Right lobe of liver (tissue), 6 donors: ENCODE measurements at regions of chr11 and their contacts with region 1.

Region 1: GRCh38 chr11:114060392-114061350 is 1.2 kb downstream of the ZBTB16 start:
- DNase-seq: peak in 2 of 3 donors; percentile 64 to 70
- ATAC-seq: peak in 2 of 4 donors; percentile 14 to 20
- H3K4me3 ChIP-seq: peak overlapping the region; percentile 78 to 96 (median 89)
- H3K27ac ChIP-seq: peak overlapping the region; percentile 93 to 100 (median 94)
- H3K4me1 ChIP-seq: peaks cover 0 to 56% (median 21%) of the 10 kb centered on the region in 4 donors
- H3K27me3 ChIP-seq: no peaks in the 10 kb centered on the region
- CTCF ChIP-seq: no peak
- POLR2A ChIP-seq: no peak

Region 2: GRCh38 chr11:113994077-113994954 is 66.4 kb before region 1 on chr11:
- intact Hi-C with region 1: no loop called
- DNase-seq: no peak
- ATAC-seq: peak; percentile 52 to 68 (median 60)
- H3K4me3 ChIP-seq: no peak overlapping the region
- H3K27ac ChIP-seq: no peak overlapping the region
- H3K4me1 ChIP-seq: peaks cover 0 to 4% (median 0%) of the 10 kb centered on the region in 4 donors
- H3K27me3 ChIP-seq: no peaks in the 10 kb centered on the region
- CTCF ChIP-seq: peak; percentile 64 to 69 (median 68)
- POLR2A ChIP-seq: no peak

Region 3: DNA sequence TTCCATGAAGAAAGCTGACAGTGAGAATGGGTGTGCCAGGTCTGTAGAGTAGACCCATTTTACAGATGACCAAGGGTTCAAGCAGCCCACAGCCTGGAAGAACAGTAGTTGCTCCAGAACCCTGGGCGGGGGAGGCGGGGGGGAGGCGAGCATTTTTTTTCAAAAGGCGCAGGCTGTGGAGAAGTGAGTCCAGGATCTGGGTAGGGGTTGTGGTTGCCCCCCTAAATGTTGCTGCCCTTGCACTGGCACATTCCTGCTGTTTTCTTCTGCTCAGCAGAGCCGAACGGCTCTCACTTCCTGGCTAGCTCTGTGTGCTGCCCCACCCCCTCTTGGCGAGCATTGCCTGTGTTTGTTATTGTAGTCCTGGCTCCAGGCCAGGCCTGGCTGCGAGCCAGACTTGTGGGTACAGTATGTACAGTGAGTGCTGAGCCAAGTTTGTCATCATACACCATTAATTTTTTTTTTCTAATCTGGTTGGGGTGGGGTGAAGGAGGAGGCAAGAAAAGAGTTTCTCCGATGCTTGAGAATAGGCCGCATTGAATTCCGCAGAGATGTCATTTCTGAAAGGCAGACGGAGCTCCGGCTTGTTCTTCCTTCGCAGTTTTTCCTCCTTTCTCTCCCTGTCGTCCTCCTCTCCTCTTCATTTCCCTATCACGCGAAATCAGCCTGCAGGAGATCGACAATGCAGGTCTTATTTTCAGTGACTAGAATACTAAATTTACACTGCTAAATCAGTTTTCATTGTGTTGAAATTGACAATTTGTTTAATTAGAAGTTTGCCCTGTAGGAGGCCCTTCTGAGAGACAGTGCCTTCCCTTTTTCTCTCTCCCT is 99.3 kb after region 1 on chr11:
- intact Hi-C with region 1: loop called in 1 of 2 experiments (anchors 10 kb)
- DNase-seq: peak; percentile 96 to 97 (median 96)
- ATAC-seq: peak; percentile 63 to 69 (median 64)
- H3K4me3 ChIP-seq: peak overlapping the region in 1 of 3 donors; percentile 9
- H3K27ac ChIP-seq: peak overlapping the region; percentile 81 to 98 (median 93)
- H3K4me1 ChIP-seq: peaks cover 0 to 97% (median 56%) of the 10 kb centered on the region in 4 donors
- H3K27me3 ChIP-seq: no peaks in the 10 kb centered on the region
- CTCF ChIP-seq: peak in 1 of 4 donors; percentile 4
- POLR2A ChIP-seq: peak; percentile 32